ENCODE measurements at regions of chr4 and their contacts with region 1.

Region 1: DNA sequence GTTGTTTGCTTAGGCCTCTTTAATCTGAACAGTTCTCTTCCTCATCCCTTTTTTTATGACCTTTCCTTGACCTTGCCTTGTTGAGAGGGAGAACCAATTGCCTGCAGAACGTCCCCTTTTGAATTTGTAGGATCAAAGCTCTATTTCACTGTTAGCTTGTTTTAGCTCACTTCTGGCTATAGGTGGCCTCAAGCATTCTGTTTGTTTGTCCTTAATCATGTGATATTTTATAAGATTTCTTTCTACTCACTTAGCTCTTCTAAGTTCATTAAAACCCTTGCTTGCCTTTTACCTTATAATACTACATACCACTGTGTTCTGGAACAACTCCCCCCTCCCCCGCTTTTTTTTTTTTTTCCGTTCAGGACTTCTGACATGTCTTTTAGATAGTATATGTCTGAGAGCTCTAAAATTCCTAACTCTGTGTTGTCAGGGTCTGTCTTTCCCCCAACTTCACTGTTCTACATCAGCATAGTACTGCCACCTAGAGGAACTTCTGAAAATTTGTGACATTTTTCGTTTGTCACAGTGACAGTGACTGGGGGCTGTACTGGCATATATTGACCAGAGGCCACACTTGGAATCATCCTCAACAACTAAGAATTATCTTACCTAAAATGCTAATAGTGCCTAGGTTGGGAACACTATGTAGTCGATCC is 128.5 kb downstream of the LARP7 start:
- DNase-seq: peak; percentile 34 to 65 (median 48)
- ATAC-seq: peak; percentile 89
- H3K4me3 ChIP-seq: no peak overlapping the region
- H3K27ac ChIP-seq: no peak overlapping the region
- H3K4me1 ChIP-seq: 0 out of 5 replicates have a peak, but pooled peaks cover 0 to 3% of the 10 kb centered on the region in 2 experiments
- H3K27me3 ChIP-seq: peaks cover 0 to 7% of the 10 kb centered on the region in 2 experiments; a peak in 1 of 5 replicates
- CTCF ChIP-seq: peak; percentile 45 to 61 (median 51); a peak in 5 of 6 replicates
- EP300 ChIP-seq: no peak
- POLR2A ChIP-seq: no peak
- RAD21 ChIP-seq: peak in 1 of 2 experiments; percentile 41; a peak in 2 of 4 replicates

Region 2: DNA sequence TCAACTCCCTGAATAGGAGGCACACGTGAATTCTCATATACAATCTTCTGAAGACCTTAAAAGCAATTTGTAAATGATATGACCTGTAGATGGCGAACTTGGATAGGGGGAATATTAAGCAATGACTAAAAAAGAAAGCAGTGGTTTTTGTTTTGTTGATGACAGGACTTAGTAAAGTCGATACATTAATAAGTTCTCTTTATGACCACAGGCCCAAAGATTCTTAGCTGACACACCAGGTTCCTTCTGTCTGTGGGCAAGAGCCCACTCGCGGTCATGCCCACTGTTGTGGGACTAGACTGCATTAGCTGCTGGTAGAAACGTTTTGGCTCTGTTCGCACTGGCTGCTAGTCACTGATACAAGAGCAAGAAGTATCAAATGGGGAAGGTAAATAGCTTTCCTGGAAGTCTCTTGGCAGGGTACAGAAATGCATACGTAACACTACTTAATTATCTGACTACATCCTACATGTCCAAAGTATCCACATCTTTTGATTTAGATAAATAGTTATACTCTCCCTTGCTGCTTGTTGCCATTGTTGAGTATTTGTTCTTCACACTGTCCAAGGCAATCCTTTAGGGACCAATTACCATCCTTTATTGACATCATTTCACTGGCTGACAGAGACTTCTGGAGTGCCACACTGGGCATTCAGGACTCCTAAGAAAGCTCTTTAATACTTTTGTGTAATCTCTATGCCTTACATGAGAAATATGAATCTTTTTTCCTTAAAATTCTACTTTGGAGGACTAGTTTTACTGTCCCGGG is 437.3 kb before region 1 on chr4:
- CTCF ChIA-PET with region 1: interaction called, 6 read pairs
- POLR2A ChIA-PET with region 1: no interaction called
- in situ Hi-C with region 1: loop called (anchors 25 kb)
- intact Hi-C with region 1: loop called (anchors 1 kb)
- DNase-seq: peak in 2 of 4 experiments; percentile 8 to 37
- ATAC-seq: peak; percentile 54; the same call in 2 of the 3 replicates
- H3K4me3 ChIP-seq: no peak overlapping the region
- H3K27ac ChIP-seq: no peak overlapping the region
- H3K4me1 ChIP-seq: no peaks in the 10 kb centered on the region
- H3K27me3 ChIP-seq: no peaks in the 10 kb centered on the region
- CTCF ChIP-seq: peak; percentile 24 to 62 (median 34); a peak in 3 of 6 replicates
- EP300 ChIP-seq: no peak
- POLR2A ChIP-seq: no peak
- RAD21 ChIP-seq: peak; percentile 44 to 51

Region 3: DNA sequence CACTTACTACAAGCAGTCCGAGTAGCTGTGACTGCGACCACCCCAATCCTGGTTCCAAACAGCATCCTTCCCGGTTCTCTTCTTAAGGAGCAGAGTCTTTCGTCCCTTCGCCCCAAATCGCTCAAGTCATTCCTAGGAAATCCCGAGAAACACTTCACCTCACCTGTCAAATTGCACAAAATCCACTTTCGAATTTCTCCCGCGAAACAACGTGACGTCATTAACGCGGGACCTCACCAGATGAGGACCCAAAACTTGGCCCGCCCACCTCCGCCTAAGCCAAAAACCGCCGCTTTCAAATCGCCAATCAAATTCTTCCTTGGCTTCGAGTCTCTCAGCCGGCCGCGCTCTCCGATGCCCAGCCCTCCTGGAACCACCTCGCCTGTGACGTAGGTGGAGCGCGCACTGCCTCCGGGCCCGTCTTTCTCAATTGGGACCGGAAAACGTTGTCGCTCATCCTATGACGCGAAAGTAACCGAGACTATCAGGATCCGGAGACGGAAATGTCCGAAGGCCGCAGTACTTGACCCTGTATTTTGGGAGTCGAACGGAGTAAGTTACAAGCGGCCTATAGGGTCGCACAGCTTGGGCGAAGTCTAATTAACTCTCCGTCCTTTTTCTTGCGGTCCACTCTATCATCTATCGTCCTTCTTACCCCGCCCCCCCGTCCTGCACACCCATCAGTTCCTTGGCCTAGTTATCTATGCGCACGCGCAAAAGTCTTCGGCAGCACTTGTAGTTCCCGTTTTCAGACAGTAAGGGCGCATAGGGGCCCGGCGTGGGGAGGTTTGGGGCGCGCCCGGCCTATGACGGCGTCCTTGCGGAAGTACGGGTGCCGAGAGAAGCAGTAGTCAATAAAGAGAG is 128.5 kb before region 1 on chr4 and contains the starts of genes LARP7 and ZGRF1:
- CTCF ChIA-PET with region 1: interaction called, 34 read pairs
- POLR2A ChIA-PET with region 1: no interaction called
- in situ Hi-C with region 1: loop called (anchors 5 kb)
- intact Hi-C with region 1: loop called (anchors 1 kb)
- DNase-seq: peak; percentile 89 to 98 (median 90)
- ATAC-seq: peak; percentile 95
- H3K4me3 ChIP-seq: peak within 1 kb of the TSS; percentile 87
- H3K27ac ChIP-seq: peak within 1 kb of the TSS; percentile 87
- H3K4me1 ChIP-seq: peaks cover 0 to 2% of the 10 kb centered on the region in 2 experiments; a peak in 2 of 5 replicates
- H3K27me3 ChIP-seq: no peaks in the 10 kb centered on the region
- CTCF ChIP-seq: peak; percentile 79 to 88 (median 80)
- EP300 ChIP-seq: peak; percentile 42; the same call in 1 of the 2 replicates
- POLR2A ChIP-seq: peak; percentile 82
- RAD21 ChIP-seq: no peak
- polyA plus RNA-seq, gene LARP7: 55.5 to 56.0 TPM
- polyA plus RNA-seq, gene ZGRF1: 8.8 to 12.2 TPM

Region 4: GRCh38 chr4:112817933-112818593 is 52.6 kb after region 1 on chr4:
- CTCF ChIA-PET with region 1: no interaction called
- POLR2A ChIA-PET with region 1: no interaction called
- in situ Hi-C with region 1: no loop called
- intact Hi-C with region 1: no loop called
- DNase-seq: peak in 2 of 4 experiments; percentile 7 to 9
- ATAC-seq: peak; percentile 84
- H3K4me3 ChIP-seq: no peak overlapping the region
- H3K27ac ChIP-seq: no peak overlapping the region
- H3K4me1 ChIP-seq: no peaks in the 10 kb centered on the region
- H3K27me3 ChIP-seq: peaks cover 0 to 5% of the 10 kb centered on the region in 2 experiments; a peak in 1 of 5 replicates
- CTCF ChIP-seq: no peak
- EP300 ChIP-seq: no peak
- POLR2A ChIP-seq: no peak
- RAD21 ChIP-seq: no peak

Region 5: DNA sequence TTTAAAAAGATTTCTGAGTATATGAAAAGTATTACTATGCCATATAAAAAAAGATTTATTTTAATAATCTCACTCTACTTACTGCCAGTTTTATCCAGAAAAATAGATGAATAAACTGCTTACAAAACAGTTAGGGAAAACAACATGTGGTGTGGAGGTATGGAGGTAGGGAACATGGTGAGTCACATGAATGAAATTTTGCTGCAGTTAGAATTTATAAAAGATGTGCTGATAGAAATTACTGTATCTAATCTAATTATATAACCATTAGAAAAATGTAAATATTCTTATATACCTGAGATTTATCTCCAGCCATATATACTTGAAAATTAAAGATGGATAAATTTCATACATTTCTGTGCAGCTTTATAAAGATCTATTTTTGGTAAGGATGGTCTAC is 100.0 kb after region 1 on chr4:
- CTCF ChIA-PET with region 1: no interaction called
- POLR2A ChIA-PET with region 1: no interaction called
- in situ Hi-C with region 1: no loop called
- intact Hi-C with region 1: no loop called
- DNase-seq: no peak
- ATAC-seq: no peak
- H3K4me3 ChIP-seq: no peak overlapping the region
- H3K27ac ChIP-seq: no peak overlapping the region
- H3K4me1 ChIP-seq: no peaks in the 10 kb centered on the region
- H3K27me3 ChIP-seq: peaks cover 0 to 4% of the 10 kb centered on the region in 2 experiments; a peak in 1 of 5 replicates
- CTCF ChIP-seq: no peak
- EP300 ChIP-seq: no peak
- POLR2A ChIP-seq: no peak
- RAD21 ChIP-seq: no peak

Region 6: DNA sequence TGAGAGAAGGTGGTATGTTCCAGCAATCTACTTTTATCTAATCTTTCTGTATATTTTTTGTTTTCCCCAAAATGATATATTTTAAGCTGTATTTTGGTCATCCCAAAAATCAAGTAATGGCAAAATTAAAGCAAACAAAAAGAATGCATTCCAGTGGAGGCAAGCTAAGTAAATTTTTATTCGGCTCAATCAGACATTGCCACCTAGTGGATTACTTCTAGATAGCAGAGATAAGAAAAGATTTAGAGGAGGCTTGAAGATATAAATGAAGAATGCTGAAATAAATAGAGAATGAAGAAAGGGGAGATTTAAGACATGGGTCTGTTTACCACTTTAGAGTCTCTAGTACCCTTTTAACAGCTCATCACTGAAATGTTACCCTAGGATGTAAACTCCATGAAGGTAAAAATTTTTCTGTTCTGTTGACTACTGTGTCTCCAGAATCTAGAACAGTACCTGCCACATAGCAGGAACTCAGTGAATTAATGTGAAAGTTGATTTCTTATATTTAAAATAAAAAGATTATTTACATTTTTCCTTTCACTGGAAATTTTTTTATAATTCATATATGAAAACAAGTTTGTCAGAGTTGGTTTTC is 173.1 kb after region 1 on chr4:
- CTCF ChIA-PET with region 1: interaction called, 4 read pairs
- POLR2A ChIA-PET with region 1: no interaction called
- in situ Hi-C with region 1: no loop called
- intact Hi-C with region 1: loop called (anchors 5 kb)
- DNase-seq: peak in 2 of 4 experiments; percentile 7 to 10
- ATAC-seq: no peak
- H3K4me3 ChIP-seq: no peak overlapping the region
- H3K27ac ChIP-seq: no peak overlapping the region
- H3K4me1 ChIP-seq: no peaks in the 10 kb centered on the region
- H3K27me3 ChIP-seq: no peaks in the 10 kb centered on the region
- CTCF ChIP-seq: peak in 2 of 3 experiments; percentile 26 to 50; a peak in 3 of 6 replicates
- EP300 ChIP-seq: no peak
- POLR2A ChIP-seq: no peak
- RAD21 ChIP-seq: peak; percentile 39 to 43; a peak in 3 of 4 replicates

Region 7: GRCh38 chr4:113094802-113095201 is 329.4 kb after region 1 on chr4:
- CTCF ChIA-PET with region 1: no interaction called
- POLR2A ChIA-PET with region 1: no interaction called
- in situ Hi-C with region 1: no loop called
- intact Hi-C with region 1: loop called (anchors 10 kb)
- DNase-seq: peak; percentile 4 to 22 (median 12)
- ATAC-seq: no peak
- H3K4me3 ChIP-seq: no peak overlapping the region
- H3K27ac ChIP-seq: no peak overlapping the region
- H3K4me1 ChIP-seq: no peaks in the 10 kb centered on the region
- H3K27me3 ChIP-seq: no peaks in the 10 kb centered on the region
- CTCF ChIP-seq: peak; percentile 23 to 42 (median 40); a peak in 4 of 6 replicates
- EP300 ChIP-seq: no peak
- POLR2A ChIP-seq: no peak
- RAD21 ChIP-seq: peak; percentile 25 to 29; a peak in 3 of 4 replicates

Region 8: DNA sequence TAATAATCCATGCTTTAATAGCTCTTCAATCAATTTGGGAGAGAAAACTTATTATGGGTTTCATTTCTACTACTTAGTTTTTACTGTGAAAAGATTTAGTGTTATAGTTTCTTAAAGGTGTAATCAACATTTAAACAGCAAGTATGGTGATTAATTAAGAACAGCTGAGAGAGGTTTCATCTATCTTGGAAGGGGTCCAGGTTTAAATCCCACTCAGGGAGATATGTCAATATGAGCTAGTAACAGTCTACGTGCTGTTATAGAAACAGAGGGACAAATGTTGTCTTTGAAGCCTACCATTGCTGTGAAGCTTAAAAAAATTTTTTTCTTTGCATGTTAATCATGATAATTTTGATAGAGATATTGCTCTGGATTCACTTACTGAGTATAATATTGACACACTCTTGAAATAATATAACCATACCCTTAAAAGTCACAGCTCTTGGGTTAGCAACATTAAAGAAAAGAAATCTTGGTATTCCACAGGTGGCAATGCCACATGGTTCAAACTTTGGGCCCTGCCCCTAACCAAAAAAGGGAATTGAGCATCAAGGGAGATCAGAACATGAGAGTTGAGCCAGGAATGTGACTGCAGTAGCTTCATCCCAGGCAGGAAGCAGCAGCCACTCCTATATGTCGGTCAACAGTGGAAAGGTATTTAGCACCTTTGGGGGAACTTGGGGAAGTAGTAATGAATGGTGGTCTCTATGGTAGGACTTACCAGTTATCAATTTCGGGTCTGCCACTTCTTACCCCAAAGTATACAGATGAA is 391.8 kb after region 1 on chr4:
- CTCF ChIA-PET with region 1: no interaction called
- POLR2A ChIA-PET with region 1: no interaction called
- in situ Hi-C with region 1: no loop called
- intact Hi-C with region 1: no loop called
- DNase-seq: no peak
- ATAC-seq: no peak
- H3K4me3 ChIP-seq: no peak overlapping the region
- H3K27ac ChIP-seq: no peak overlapping the region
- H3K4me1 ChIP-seq: no peaks in the 10 kb centered on the region
- H3K27me3 ChIP-seq: no peaks in the 10 kb centered on the region
- CTCF ChIP-seq: no peak
- EP300 ChIP-seq: no peak
- POLR2A ChIP-seq: no peak
- RAD21 ChIP-seq: no peak

Region 9: DNA sequence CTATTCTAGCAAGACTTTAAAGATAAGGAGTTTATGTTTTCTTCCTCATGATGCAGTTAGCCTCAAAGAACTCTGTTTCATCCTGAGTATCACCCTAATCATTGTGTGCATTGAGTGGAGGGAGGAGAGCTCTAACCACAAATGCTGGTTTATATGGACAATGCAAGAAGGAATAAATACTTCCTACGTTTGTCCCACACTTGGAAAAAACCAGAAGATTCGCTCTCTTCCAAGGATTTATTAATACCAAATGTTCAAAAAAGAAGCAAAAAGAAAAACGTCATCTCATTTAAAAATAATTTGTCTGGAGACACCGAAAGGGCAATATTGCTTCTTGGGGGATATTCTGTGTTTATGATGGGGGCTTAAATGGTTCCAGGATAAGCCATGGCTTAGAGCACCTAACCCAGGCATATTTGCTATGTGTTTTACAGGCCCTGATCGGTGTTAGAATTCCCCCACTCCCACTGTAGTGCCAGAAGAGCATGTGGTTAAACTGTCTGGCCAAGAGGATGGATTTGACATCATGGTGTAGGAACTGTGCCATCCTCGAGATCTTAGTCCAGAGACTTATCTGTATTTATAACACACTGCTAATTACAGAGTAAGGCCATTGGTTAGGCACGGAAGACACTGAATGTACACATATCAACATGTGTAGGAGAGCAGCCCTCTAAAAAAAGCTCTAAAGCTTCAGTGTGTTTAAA is 511.2 kb after region 1 on chr4:
- CTCF ChIA-PET with region 1: no interaction called
- POLR2A ChIA-PET with region 1: no interaction called
- in situ Hi-C with region 1: no loop called
- intact Hi-C with region 1: no loop called
- DNase-seq: no peak
- ATAC-seq: no peak
- H3K4me3 ChIP-seq: no peak overlapping the region
- H3K27ac ChIP-seq: no peak overlapping the region
- H3K4me1 ChIP-seq: no peaks in the 10 kb centered on the region
- H3K27me3 ChIP-seq: no peaks in the 10 kb centered on the region
- CTCF ChIP-seq: no peak
- EP300 ChIP-seq: no peak
- POLR2A ChIP-seq: no peak
- RAD21 ChIP-seq: no peak

Measured in K562 (cell line).